ENCODE measurements at regions of chr1 and their contacts with region 1.

Region 1: DNA sequence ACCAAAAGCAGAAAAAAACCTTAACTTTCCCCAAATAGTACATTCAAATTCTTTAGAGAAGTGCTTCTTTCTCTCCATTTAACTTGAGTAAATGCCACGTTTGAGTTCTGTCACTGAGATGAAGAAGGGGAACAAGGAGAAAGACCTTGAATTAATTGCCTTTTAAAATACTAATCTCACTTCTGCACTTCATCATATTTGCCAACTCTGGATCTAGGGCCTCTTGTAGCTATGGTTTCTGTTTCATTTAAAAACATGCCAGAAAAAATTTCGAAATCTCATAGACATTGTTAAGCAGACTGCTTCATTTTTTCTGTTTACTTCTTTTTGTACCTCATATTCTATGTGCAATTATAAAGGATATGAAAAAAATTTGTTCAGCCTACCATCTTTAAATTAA is 24.6 kb downstream of the MIXL1 start:
- DNase-seq: no peak
- H3K4me3 ChIP-seq: no peak overlapping the region
- H3K27ac ChIP-seq: no peak overlapping the region
- H3K4me1 ChIP-seq: no peaks in the 10 kb centered on the region
- H3K27me3 ChIP-seq: no peaks in the 10 kb centered on the region
- CTCF ChIP-seq: no peak

Region 2: DNA sequence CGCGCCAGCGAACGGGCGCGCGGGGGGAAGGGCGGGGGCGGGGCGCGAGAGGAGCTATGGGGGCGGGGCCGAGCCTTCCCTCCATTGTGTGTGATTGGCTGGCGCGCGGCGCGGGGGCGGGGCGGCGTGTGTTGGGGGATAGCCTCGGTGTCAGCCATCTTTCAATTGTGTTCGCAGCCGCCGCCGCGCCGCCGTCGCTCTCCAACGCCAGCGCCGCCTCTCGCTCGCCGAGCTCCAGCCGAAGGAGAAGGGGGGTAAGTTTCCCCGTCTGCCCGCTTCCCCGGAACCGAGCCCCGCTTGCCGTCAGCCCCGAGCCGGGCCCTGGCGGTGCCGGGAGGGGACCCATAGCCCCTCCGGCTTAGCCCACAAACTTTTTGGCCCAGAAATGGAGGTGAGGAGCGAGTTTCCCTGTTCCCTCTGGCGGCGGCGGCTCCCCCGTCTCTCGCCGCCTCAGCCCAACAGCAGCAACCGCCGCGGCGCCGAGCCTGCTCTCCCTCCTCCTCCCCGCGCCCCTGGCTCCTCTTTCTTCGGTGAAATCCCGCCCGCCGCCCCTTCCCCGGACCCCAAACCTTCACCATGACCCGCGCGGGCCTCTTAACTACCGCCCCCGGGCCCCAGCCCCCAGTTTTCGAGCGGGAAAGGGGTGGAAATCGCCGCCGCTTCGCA is 185.4 kb before region 1 on chr1 and contains the start of gene H3-3A:
- CTCF ChIA-PET with region 1: no interaction called
- POLR2A ChIA-PET with region 1: no interaction called
- intact Hi-C with region 1: no loop called
- DNase-seq: peak; percentile 97
- H3K4me3 ChIP-seq: peak within 1 kb of the TSS; percentile 76
- H3K27ac ChIP-seq: peak within 1 kb of the TSS; percentile 99
- H3K4me1 ChIP-seq: peaks cover 21% of the 10 kb centered on the region
- H3K27me3 ChIP-seq: no peaks in the 10 kb centered on the region
- CTCF ChIP-seq: 0 out of 2 replicates have a peak, but pooled peaks have one; percentile 18
- total RNA-seq, gene H3-3A: 638 and 640 TPM in 2 replicates

Region 3: GRCh38 chr1:226308723-226309315 is 60.7 kb after region 1 on chr1 and contains the start of gene LIN9:
- CTCF ChIA-PET with region 1: no interaction called
- POLR2A ChIA-PET with region 1: interaction called, 16 read pairs
- intact Hi-C with region 1: no loop called
- DNase-seq: peak; percentile 96
- H3K4me3 ChIP-seq: peak within 1 kb of the TSS; percentile 99
- H3K27ac ChIP-seq: peak within 1 kb of the TSS; percentile 99
- H3K4me1 ChIP-seq: peaks cover 16% of the 10 kb centered on the region
- H3K27me3 ChIP-seq: no peaks in the 10 kb centered on the region
- CTCF ChIP-seq: no peak
- total RNA-seq, gene LIN9: 20.2 and 20.7 TPM in 2 replicates

Region 4: GRCh38 chr1:226611301-226611700 is 363.2 kb after region 1 on chr1:
- CTCF ChIA-PET with region 1: no interaction called
- POLR2A ChIA-PET with region 1: no interaction called
- intact Hi-C with region 1: no loop called
- DNase-seq: no peak
- H3K4me3 ChIP-seq: no peak overlapping the region
- H3K27ac ChIP-seq: no peak overlapping the region
- H3K4me1 ChIP-seq: no peaks in the 10 kb centered on the region
- H3K27me3 ChIP-seq: no peaks in the 10 kb centered on the region
- CTCF ChIP-seq: no peak

Measured in A673 (cell line).